ENCODE measurements at regions of chr9 and their contacts with region 1.

Region 1: DNA sequence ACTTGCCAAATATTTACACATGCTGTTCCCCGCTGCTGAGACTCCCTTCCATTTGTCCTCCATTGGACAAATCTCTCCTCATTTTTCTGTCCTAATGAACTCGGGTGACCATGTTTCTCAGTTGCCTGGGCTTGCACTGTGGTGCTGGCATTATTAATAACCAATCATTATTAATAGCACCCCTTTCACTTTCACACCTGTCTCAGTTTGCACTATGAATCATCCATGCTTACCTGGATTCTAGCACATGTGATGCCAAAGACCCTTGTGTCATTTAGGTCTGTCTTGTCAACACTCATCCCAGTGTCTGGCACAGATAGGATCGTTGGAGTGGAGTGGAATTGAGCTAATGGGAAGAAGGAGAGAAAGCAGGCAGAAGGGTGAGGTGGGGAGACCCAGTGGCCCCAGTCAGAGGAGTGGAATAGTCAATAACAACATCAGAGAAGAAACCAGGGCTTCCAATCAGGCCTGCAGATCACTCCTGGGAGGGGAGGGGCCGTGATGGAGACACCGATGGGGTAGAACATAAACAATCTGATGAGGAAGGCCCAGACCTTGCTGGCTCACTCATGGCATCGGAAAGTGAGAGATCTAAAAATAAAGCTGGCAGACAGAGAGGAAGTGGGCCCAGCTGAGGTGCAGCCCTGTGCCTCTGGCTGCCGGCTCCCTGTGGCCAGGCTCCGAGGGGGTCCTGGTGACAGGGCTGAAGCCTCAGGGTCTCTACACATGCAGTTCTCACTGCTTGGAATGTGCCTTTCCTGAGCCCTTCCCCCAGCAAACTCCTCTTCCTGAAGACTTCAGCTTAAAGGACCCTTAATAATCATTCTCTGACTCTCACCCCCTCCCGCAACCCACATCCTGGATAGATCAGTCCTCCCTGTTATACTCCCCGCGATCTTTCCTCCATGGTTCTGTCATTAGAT is 33.5 kb upstream of the CRB2 start:
- DNase-seq: peak; percentile 76
- H3K4me3 Mint-ChIP-seq: peak overlapping the region; percentile 51
- H3K27ac Mint-ChIP-seq: peak overlapping the region; percentile 92
- H3K4me1 Mint-ChIP-seq: peaks cover 50% of the 10 kb centered on the region
- H3K27me3 Mint-ChIP-seq: no peaks in the 10 kb centered on the region

Region 2: GRCh38 chr9:123338710-123339665 is 16.5 kb after region 1 on chr9:
- CTCF ChIA-PET with region 1: interaction called, 38 read pairs
- POLR2A ChIA-PET with region 1: no interaction called
- DNase-seq: peak; percentile 47
- H3K4me3 Mint-ChIP-seq: peak overlapping the region; percentile 63
- H3K27ac Mint-ChIP-seq: peak overlapping the region; percentile 90
- H3K4me1 Mint-ChIP-seq: peaks cover 32% of the 10 kb centered on the region
- H3K27me3 Mint-ChIP-seq: no peaks in the 10 kb centered on the region

Region 3: GRCh38 chr9:123360161-123361085 is 37.9 kb after region 1 on chr9:
- CTCF ChIA-PET with region 1: no interaction called
- POLR2A ChIA-PET with region 1: no interaction called
- DNase-seq: peak; percentile 55
- H3K4me3 Mint-ChIP-seq: no peak overlapping the region
- H3K27ac Mint-ChIP-seq: no peak overlapping the region
- H3K4me1 Mint-ChIP-seq: peaks cover 26% of the 10 kb centered on the region
- H3K27me3 Mint-ChIP-seq: peaks cover 3% of the 10 kb centered on the region

Measured in activated CD4-positive, alpha-beta T cell treated with anti-CD3 and anti-CD28 coated beads, Interleukin-2, amount 10 ng/mL, durations not matched to agents 7 days and 5 days (primary cell).